ENCODE measurements at regions of chr4 and their contacts with region 1.

Region 1: DNA sequence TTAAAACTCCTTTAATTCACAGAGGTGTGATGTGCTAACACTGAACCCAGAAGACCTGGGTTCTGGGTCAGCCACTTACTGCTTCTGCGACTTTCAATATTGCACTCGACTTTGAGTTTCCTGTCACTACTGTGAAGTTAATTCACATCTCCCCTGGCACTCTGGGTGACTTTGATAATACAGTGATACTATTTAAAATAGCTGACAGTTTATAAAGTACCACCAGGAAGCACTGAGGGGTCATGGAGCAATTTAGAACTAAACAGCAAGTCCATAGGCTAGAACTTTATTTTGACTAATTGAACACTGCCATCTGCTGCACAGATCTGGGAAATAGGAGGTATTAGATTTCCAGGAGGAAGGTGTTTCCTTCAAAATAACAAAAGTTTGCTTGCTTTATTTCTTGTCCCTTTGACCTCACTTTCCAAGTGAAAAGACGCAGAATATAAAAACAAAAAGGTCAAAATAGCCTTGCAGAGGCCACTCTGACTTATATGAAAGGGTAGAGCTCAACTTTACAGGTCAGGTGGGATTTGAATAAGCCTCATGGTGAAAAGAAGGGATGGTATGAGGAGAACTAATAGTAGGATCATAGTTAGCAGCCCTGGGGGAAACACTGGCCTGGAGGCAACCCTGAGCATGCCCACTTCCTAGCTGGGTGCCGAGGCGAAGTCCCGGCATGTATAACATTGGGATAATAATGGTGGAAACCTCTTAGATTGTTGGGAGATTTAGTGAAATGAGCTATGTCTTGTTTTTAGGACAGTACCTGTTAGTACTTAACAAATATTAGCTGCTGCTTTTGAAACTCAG is 53.4 kb downstream of the ZNF518B start:
- ATAC-seq: peak in 4 of 8 experiments; percentile 42 to 58 (median 46)
- H3K4me3 ChIP-seq: no peak overlapping the region
- H3K27ac ChIP-seq: no peak overlapping the region
- H3K4me1 ChIP-seq: no peaks in the 10 kb centered on the region

Region 2: DNA sequence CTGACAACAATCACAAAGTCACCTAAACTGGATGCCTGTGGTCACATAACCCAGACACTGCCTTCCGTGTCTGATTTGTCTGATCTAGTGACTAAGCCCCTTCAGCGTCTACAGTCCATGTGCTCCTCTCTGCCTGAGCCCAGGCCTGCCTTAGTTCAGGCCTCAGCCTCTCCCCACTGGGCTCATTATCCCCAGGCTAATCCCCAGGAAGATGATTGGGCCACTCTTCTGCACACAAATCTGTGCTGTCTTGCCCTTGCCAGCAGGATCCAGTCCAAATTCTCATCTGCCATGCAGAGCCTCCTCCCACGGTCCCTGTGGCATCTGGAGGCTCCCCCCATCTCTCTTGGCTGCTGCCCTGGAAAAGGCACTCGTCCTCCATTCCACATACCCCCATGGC is 479.1 kb before region 1 on chr4:
- in situ Hi-C with region 1: no loop called
- ATAC-seq: peak in 6 of 8 experiments; percentile 13 to 56 (median 38)
- H3K4me3 ChIP-seq: no peak overlapping the region
- H3K27ac ChIP-seq: no peak overlapping the region
- H3K4me1 ChIP-seq: peaks cover 9 to 17% of the 10 kb centered on the region in 2 donors

Region 3: GRCh38 chr4:10173037-10173753 is 230.6 kb before region 1 on chr4:
- in situ Hi-C with region 1: loop called in 2 of 9 experiments (anchors 10 to 25 kb)
- ATAC-seq: peak; percentile 59 to 90 (median 80)
- H3K4me3 ChIP-seq: no peak overlapping the region
- H3K27ac ChIP-seq: no peak overlapping the region
- H3K4me1 ChIP-seq: peaks cover 0 to 4% of the 10 kb centered on the region in 2 donors

Region 4: DNA sequence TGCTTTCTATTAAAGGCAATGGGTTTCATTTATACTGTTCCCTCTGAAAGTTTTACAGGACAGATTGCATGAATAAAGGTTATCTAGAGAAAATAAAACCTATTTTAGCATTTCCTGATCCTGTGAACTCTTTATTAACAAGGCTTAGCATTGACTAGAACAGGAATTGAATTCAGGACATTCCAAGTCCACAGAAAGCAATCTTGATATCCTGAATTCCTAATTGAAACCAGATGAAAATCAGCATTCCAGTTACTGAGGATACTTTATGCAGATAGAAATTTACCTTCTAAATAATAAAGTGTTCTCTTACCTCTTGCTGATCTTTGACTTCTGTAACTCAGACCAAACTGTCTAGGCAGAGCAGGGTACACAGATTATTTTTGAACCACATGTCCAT is 98.0 kb before region 1 on chr4:
- in situ Hi-C with region 1: no loop called
- ATAC-seq: no peak
- H3K4me3 ChIP-seq: no peak overlapping the region
- H3K27ac ChIP-seq: no peak overlapping the region
- H3K4me1 ChIP-seq: no peaks in the 10 kb centered on the region

Region 5: DNA sequence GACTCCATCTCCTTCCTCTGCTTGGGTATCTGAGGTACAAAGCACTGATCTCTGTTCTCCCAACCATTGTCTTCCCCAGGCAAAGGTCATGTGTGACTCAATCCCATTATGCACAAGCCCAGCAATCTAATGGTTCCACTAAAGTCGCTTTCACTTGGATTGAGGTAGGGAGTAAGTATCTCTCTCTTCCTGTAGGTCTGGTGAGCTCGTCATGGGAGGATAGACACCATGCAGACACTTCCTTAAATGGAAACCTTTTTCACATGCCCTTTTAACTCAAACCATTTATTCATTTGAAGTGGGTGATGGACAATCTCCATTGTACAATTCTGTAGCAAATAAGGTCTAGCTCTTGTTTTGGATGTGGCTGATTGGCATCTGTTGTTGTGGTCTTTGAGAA is 526.0 kb after region 1 on chr4:
- in situ Hi-C with region 1: no loop called
- ATAC-seq: no peak
- H3K4me3 ChIP-seq: no peak overlapping the region
- H3K27ac ChIP-seq: no peak overlapping the region
- H3K4me1 ChIP-seq: peaks cover 4% of the 10 kb centered on the region in 2 donors